ENCODE measurements at regions of chr3 and their contacts with region 1.

Region 1: GRCh38 chr3:190968616-190969015 is 106.1 kb upstream of the GMNC start:
- DNase-seq: no peak
- ATAC-seq: no peak
- H3K4me3 ChIP-seq: no peak overlapping the region
- H3K27ac ChIP-seq: no peak overlapping the region
- H3K4me1 ChIP-seq: peaks cover 7% of the 10 kb centered on the region; the same call in 1 of the 2 replicates
- H3K27me3 ChIP-seq: no peaks in the 10 kb centered on the region
- CTCF ChIP-seq: no peak

Region 2: GRCh38 chr3:190941694-190942260 is 26.8 kb before region 1 on chr3:
- CTCF ChIA-PET with region 1: no interaction called
- POLR2A ChIA-PET with region 1: no interaction called
- intact Hi-C with region 1: loop called (anchors 2 kb)
- DNase-seq: no peak
- ATAC-seq: no peak
- H3K4me3 ChIP-seq: no peak overlapping the region
- H3K27ac ChIP-seq: no peak overlapping the region
- H3K4me1 ChIP-seq: no peaks in the 10 kb centered on the region
- H3K27me3 ChIP-seq: no peaks in the 10 kb centered on the region
- CTCF ChIP-seq: no peak

Region 3: DNA sequence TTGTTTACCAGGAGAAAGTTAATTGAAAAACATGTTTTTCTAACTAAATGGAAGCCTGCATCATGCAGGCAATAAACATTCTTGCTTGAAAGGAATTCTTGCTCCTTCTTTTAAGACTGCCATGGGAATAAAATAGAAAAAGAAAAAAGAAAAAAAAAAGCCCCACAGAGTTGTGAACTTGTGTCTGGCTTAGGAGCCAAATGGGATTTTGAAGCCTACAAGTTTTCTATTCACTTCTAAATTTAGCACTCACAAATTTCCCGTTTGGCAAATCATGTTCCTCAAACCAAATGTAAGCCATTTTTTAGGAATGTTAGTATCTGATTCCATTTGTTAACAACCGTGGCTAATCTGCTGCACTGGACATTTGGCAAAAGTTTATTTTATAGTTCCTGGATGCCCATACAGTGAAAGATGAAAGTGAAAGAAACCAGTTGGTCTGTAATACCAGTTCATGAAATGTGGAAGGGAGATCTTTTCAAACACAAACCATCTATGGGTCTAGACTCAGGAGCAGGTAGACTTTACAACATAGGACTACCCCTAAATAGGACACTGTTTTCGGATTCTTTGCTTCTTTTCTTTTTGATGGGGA is 27.7 kb after region 1 on chr3:
- CTCF ChIA-PET with region 1: no interaction called
- POLR2A ChIA-PET with region 1: no interaction called
- intact Hi-C with region 1: no loop called
- DNase-seq: no peak
- ATAC-seq: no peak
- H3K4me3 ChIP-seq: no peak overlapping the region
- H3K27ac ChIP-seq: no peak overlapping the region
- H3K4me1 ChIP-seq: 0 out of 2 replicates have a peak, but pooled peaks cover 7% of the 10 kb centered on the region
- H3K27me3 ChIP-seq: no peaks in the 10 kb centered on the region
- CTCF ChIP-seq: no peak

Region 4: GRCh38 chr3:191094057-191094845 is 125.6 kb after region 1 on chr3:
- CTCF ChIA-PET with region 1: no interaction called
- POLR2A ChIA-PET with region 1: no interaction called
- intact Hi-C with region 1: no loop called
- DNase-seq: peak; percentile 90
- ATAC-seq: peak; percentile 97
- H3K4me3 ChIP-seq: no peak overlapping the region
- H3K27ac ChIP-seq: no peak overlapping the region
- H3K4me1 ChIP-seq: peaks cover 14% of the 10 kb centered on the region
- H3K27me3 ChIP-seq: no peaks in the 10 kb centered on the region
- CTCF ChIP-seq: no peak

Measured in PC-3 (cell line).